Sigmoid colon (tissue), 7 donors: ENCODE measurements at regions of chr22 and their contacts with region 1.

Region 1: GRCh38 chr22:46367707-46368191 is 32.2 kb downstream of the TRMU start:
- DNase-seq: no peak
- H3K4me3 ChIP-seq: no peak overlapping the region
- H3K27ac ChIP-seq: no peak overlapping the region
- H3K4me1 ChIP-seq: no peaks in the 10 kb centered on the region
- H3K27me3 ChIP-seq: peaks cover 4 to 36% (median 12%) of the 10 kb centered on the region in 3 donors
- CTCF ChIP-seq: peak; percentile 50 to 89 (median 78)
- EP300 ChIP-seq: no peak
- POLR2A ChIP-seq: no peak

Region 2: GRCh38 chr22:46491923-46492322 is 124.2 kb after region 1 on chr22:
- intact Hi-C with region 1: no loop called
- DNase-seq: no peak
- H3K4me3 ChIP-seq: no peak overlapping the region
- H3K27ac ChIP-seq: no peak overlapping the region
- H3K4me1 ChIP-seq: no peaks in the 10 kb centered on the region
- H3K27me3 ChIP-seq: no peaks in the 10 kb centered on the region
- CTCF ChIP-seq: no peak
- EP300 ChIP-seq: no peak
- POLR2A ChIP-seq: no peak

Region 3: DNA sequence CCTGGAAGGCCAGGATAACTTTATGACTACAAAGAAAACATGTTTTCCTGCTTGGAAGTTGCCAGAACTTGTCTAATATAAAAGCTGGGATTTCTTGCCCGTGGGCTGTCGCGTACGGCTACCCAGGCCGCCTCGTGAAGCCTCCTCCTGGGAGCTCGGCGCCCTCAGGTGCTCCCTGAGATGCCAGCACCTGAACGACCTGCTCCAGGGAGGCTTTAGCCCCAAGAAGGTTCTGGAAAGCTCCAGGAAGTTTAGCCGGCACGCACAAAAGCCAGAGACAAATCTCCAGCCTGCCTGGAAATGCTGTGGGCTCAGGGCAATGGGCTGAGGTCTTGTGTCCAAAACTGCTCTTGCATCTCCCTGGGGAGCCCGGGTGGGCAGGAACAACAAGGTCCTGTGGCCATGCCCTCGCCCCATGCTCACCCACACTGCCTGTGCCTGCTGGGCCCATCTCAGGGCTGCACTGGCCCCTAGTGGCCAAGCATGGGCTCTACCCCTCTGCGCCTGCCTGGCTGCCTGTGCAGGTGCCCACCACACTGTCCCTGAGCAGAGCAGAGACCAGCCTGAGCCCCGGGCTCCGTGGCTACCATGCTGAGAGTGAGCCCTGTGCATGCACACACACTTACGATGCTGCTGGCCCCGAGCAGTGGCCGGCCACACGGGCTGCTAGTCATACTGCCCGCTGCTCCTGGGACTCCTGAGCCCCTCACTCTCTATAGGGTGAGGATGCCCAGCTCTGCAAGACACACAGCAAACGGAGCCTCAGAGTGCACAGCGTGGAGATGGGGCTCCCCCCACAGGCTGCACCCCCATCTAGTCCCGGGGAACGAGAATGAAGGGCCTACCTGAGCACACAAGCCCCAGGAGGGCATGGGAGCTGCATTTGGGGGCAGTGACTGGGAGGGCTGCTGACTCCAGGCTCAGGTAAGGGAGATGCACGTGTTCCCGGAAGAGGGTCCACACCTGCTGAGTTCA is 174.5 kb after region 1 on chr22:
- intact Hi-C with region 1: loop called (anchors 2 kb)
- DNase-seq: peak; percentile 78
- H3K4me3 ChIP-seq: no peak overlapping the region
- H3K27ac ChIP-seq: no peak overlapping the region
- H3K4me1 ChIP-seq: peaks cover 0 to 27% (median 24%) of the 10 kb centered on the region in 4 donors
- H3K27me3 ChIP-seq: peaks cover 11 to 29% (median 18%) of the 10 kb centered on the region in 3 donors
- CTCF ChIP-seq: peak; percentile 56 to 92 (median 88)
- EP300 ChIP-seq: no peak
- POLR2A ChIP-seq: no peak